B cell (primary cell): ENCODE measurements at regions of chr1 and their contacts with region 1.

Region 1: GRCh38 chr1:155063550-155064110 is at the start of gene EFNA4:
- DNase-seq: peak; percentile 94
- ATAC-seq: peak; percentile 84
- H3K4me3 ChIP-seq: peak within 1 kb of the TSS; percentile 68 to 78 (median 74)
- H3K4me3 Mint-ChIP-seq: peak within 1 kb of the TSS; percentile 94
- H3K27ac ChIP-seq: peak within 1 kb of the TSS; percentile 25 to 55
- H3K27ac Mint-ChIP-seq: peak within 1 kb of the TSS; percentile 87
- H3K4me1 ChIP-seq: peaks cover 27 to 50% of the 10 kb centered on the region in 2 donors
- H3K4me1 Mint-ChIP-seq: peaks cover 47% of the 10 kb centered on the region
- H3K27me3 ChIP-seq: peaks cover 0 to 3% (median 0%) of the 10 kb centered on the region in 4 experiments
- H3K27me3 Mint-ChIP-seq: no peaks in the 10 kb centered on the region
- CTCF ChIP-seq: no peak
- total RNA-seq, gene EFNA4: 8.4 and 9.9 TPM in 2 replicates

Region 2: GRCh38 chr1:153670859-153671627 is 1392.6 kb before region 1 on chr1 and contains the start of gene ILF2:
- CTCF ChIA-PET with region 1: no interaction called
- POLR2A ChIA-PET with region 1: no interaction called
- intact Hi-C with region 1: loop called (anchors 5 kb)
- DNase-seq: peak; percentile 99
- ATAC-seq: peak; percentile 90
- H3K4me3 ChIP-seq: peak within 1 kb of the TSS; percentile 74 to 99 (median 94)
- H3K4me3 Mint-ChIP-seq: no peak within 1 kb of the TSS
- H3K27ac ChIP-seq: peak within 1 kb of the TSS; percentile 86 to 95
- H3K27ac Mint-ChIP-seq: no peak within 1 kb of the TSS
- H3K4me1 ChIP-seq: peaks cover 10 to 18% of the 10 kb centered on the region in 2 donors
- H3K4me1 Mint-ChIP-seq: peaks cover 18% of the 10 kb centered on the region
- H3K27me3 ChIP-seq: no peaks in the 10 kb centered on the region
- H3K27me3 Mint-ChIP-seq: peaks cover under 1% of the 10 kb centered on the region
- CTCF ChIP-seq: peak; percentile 26
- total RNA-seq, gene ILF2: 86.5 and 89.8 TPM in 2 replicates

Region 3: DNA sequence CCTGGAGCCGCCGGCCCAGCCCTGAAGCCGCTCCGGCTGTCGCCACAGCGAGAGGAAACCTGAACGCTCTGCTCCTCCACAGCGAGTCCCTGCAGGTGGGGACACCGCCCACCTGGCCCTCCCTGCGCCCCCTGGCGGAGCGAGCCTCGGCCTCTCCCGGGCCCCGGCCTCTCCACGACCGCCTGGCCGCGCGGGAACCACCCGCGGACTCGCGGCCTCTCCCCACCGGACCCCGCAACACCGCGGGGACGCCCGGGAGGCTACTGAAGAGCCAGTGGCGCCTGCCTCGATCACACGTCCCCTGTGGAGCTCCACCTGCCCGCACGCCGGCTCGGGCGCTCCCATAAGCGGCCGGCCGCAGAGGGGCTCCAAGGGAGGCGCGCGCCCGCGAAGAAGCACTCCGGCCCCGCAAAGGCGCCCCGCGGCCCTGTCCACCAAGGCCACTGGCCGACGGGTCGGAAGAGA is 303.1 kb before region 1 on chr1:
- CTCF ChIA-PET with region 1: no interaction called
- POLR2A ChIA-PET with region 1: no interaction called
- intact Hi-C with region 1: loop called (anchors 10 kb)
- DNase-seq: peak; percentile 85
- ATAC-seq: peak; percentile 95
- H3K4me3 ChIP-seq: peak overlapping the region in 3 of 5 experiments; percentile 28 to 35 (median 31)
- H3K4me3 Mint-ChIP-seq: no peak overlapping the region
- H3K27ac ChIP-seq: no peak overlapping the region
- H3K27ac Mint-ChIP-seq: no peak overlapping the region
- H3K4me1 ChIP-seq: peaks cover 3 to 9% of the 10 kb centered on the region in 2 donors
- H3K4me1 Mint-ChIP-seq: no peaks in the 10 kb centered on the region
- H3K27me3 ChIP-seq: peaks cover 0 to 28% (median 7%) of the 10 kb centered on the region in 4 experiments
- H3K27me3 Mint-ChIP-seq: peaks cover 41% of the 10 kb centered on the region
- CTCF ChIP-seq: peak; percentile 90

Region 4: DNA sequence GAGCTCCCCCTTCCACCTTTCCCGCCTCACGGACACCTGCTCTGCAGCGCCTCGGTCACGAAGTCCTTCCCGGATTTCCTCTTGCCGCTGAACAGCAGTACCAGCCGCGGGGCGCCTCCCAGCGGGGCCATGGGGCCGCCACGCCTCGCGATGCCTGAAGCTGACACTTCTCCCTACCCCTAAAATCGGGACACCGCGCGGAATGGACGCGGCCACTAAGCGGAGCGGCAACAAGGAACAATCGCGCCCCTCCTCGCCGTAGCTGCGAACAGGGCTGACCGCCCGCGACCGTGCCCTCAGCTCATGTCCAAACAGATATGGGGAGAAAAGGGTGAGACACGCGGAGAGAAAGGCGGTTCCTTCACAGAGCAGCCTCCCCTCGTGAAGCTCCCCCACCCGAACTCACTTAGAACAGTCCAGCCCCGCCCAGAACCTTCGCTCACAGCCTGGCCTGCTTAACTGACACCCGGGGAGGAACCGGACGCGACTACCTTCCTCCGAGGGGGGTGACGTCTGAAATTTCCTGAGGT is 127.0 kb before region 1 on chr1 and contains the start of gene PMVK:
- CTCF ChIA-PET with region 1: interaction called, 7 read pairs
- POLR2A ChIA-PET with region 1: interaction called, 3 read pairs
- intact Hi-C with region 1: loop called (anchors 1 kb)
- DNase-seq: peak; percentile 99
- ATAC-seq: peak; percentile 89
- H3K4me3 ChIP-seq: peak within 1 kb of the TSS; percentile 76 to 90 (median 80)
- H3K4me3 Mint-ChIP-seq: peak within 1 kb of the TSS; percentile 97
- H3K27ac ChIP-seq: peak within 1 kb of the TSS; percentile 98
- H3K27ac Mint-ChIP-seq: peak within 1 kb of the TSS; percentile 100
- H3K4me1 ChIP-seq: peaks cover 32 to 50% of the 10 kb centered on the region in 2 donors
- H3K4me1 Mint-ChIP-seq: peaks cover 51% of the 10 kb centered on the region
- H3K27me3 ChIP-seq: no peaks in the 10 kb centered on the region
- H3K27me3 Mint-ChIP-seq: no peaks in the 10 kb centered on the region
- CTCF ChIP-seq: peak; percentile 40
- total RNA-seq, gene PMVK: 15.0 TPM in 2 replicates

Region 5: GRCh38 chr1:155017041-155017945 is 46.3 kb before region 1 on chr1:
- CTCF ChIA-PET with region 1: interaction called, 30 read pairs
- POLR2A ChIA-PET with region 1: no interaction called
- intact Hi-C with region 1: no loop called
- DNase-seq: peak; percentile 93
- ATAC-seq: peak; percentile 75
- H3K4me3 ChIP-seq: peak overlapping the region; percentile 9 to 68 (median 49)
- H3K4me3 Mint-ChIP-seq: peak overlapping the region; percentile 84
- H3K27ac ChIP-seq: peak overlapping the region; percentile 88 to 89
- H3K27ac Mint-ChIP-seq: peak overlapping the region; percentile 93
- H3K4me1 ChIP-seq: peaks cover 53 to 67% of the 10 kb centered on the region in 2 donors
- H3K4me1 Mint-ChIP-seq: peaks cover 69% of the 10 kb centered on the region
- H3K27me3 ChIP-seq: no peaks in the 10 kb centered on the region
- H3K27me3 Mint-ChIP-seq: no peaks in the 10 kb centered on the region
- CTCF ChIP-seq: peak; percentile 99

Region 6: GRCh38 chr1:155078469-155079209 is 15.0 kb after region 1 on chr1 and contains the start of gene EFNA3:
- CTCF ChIA-PET with region 1: interaction called, 184 read pairs
- POLR2A ChIA-PET with region 1: interaction called, 18 read pairs
- intact Hi-C with region 1: no loop called
- DNase-seq: peak; percentile 77
- ATAC-seq: peak; percentile 69
- H3K4me3 ChIP-seq: peak within 1 kb of the TSS in 4 of 5 experiments; percentile 25 to 45 (median 40)
- H3K4me3 Mint-ChIP-seq: peak within 1 kb of the TSS; percentile 89
- H3K27ac ChIP-seq: no peak within 1 kb of the TSS
- H3K27ac Mint-ChIP-seq: peak within 1 kb of the TSS; percentile 79
- H3K4me1 ChIP-seq: peaks cover 52 to 58% of the 10 kb centered on the region in 2 donors
- H3K4me1 Mint-ChIP-seq: peaks cover 51% of the 10 kb centered on the region
- H3K27me3 ChIP-seq: peaks cover 0 to 48% (median 37%) of the 10 kb centered on the region in 4 experiments
- H3K27me3 Mint-ChIP-seq: peaks cover 27% of the 10 kb centered on the region
- CTCF ChIP-seq: no peak
- total RNA-seq, gene EFNA3: 1.6 and 3.7 TPM in 2 replicates

Region 7: GRCh38 chr1:155172732-155173477 is 109.3 kb after region 1 on chr1 and contains the start of gene KRTCAP2:
- CTCF ChIA-PET with region 1: interaction called, 12 read pairs
- POLR2A ChIA-PET with region 1: interaction called, 3 read pairs
- intact Hi-C with region 1: no loop called
- DNase-seq: peak; percentile 95
- ATAC-seq: peak; percentile 85
- H3K4me3 ChIP-seq: peak within 1 kb of the TSS; percentile 27 to 95 (median 73)
- H3K4me3 Mint-ChIP-seq: peak within 1 kb of the TSS; percentile 97
- H3K27ac ChIP-seq: peak within 1 kb of the TSS; percentile 89 to 92
- H3K27ac Mint-ChIP-seq: peak within 1 kb of the TSS; percentile 98
- H3K4me1 ChIP-seq: peaks cover 24 to 35% of the 10 kb centered on the region in 2 donors
- H3K4me1 Mint-ChIP-seq: peaks cover 40% of the 10 kb centered on the region
- H3K27me3 ChIP-seq: no peaks in the 10 kb centered on the region
- H3K27me3 Mint-ChIP-seq: no peaks in the 10 kb centered on the region
- CTCF ChIP-seq: peak; percentile 89
- total RNA-seq, gene KRTCAP2: 136 and 151 TPM in 2 replicates